ENCODE measurements at regions of chr1 and their contacts with region 1.

Region 1: GRCh38 chr1:232950197-232951176 is at the start of gene NTPCR:
- DNase-seq: peak; percentile 87 to 98 (median 95)
- ATAC-seq: peak; percentile 83
- H3K4me3 ChIP-seq: peak within 1 kb of the TSS; percentile 83 to 90
- H3K4me3 Mint-ChIP-seq: peak within 1 kb of the TSS; percentile 96
- H3K27ac ChIP-seq: peak within 1 kb of the TSS; percentile 56 to 64
- H3K27ac Mint-ChIP-seq: peak within 1 kb of the TSS; percentile 94
- H3K4me1 ChIP-seq: peaks cover 28% of the 10 kb centered on the region
- H3K4me1 Mint-ChIP-seq: peaks cover 44% of the 10 kb centered on the region
- H3K27me3 ChIP-seq: no peaks in the 10 kb centered on the region
- H3K27me3 Mint-ChIP-seq: no peaks in the 10 kb centered on the region
- CTCF ChIP-seq: no peak
- total RNA-seq, gene NTPCR: 3.4 to 3.9 TPM

Region 2: GRCh38 chr1:232805269-232806185 is 145.0 kb before region 1 on chr1 and contains the start of gene MAP10:
- CTCF ChIA-PET with region 1: no interaction called
- POLR2A ChIA-PET with region 1: no interaction called
- intact Hi-C with region 1: loop called (anchors 2 to 5 kb)
- DNase-seq: peak; percentile 48 to 85 (median 72)
- ATAC-seq: peak; percentile 72
- H3K4me3 ChIP-seq: peak within 1 kb of the TSS; percentile 72 to 96
- H3K4me3 Mint-ChIP-seq: peak within 1 kb of the TSS; percentile 82
- H3K27ac ChIP-seq: peak within 1 kb of the TSS; percentile 49 to 66
- H3K27ac Mint-ChIP-seq: peak within 1 kb of the TSS; percentile 73
- H3K4me1 ChIP-seq: peaks cover 8% of the 10 kb centered on the region
- H3K4me1 Mint-ChIP-seq: peaks cover 17% of the 10 kb centered on the region
- H3K27me3 ChIP-seq: no peaks in the 10 kb centered on the region
- H3K27me3 Mint-ChIP-seq: no peaks in the 10 kb centered on the region
- CTCF ChIP-seq: no peak
- total RNA-seq, gene MAP10: 0.89 to 0.98 TPM

Region 3: DNA sequence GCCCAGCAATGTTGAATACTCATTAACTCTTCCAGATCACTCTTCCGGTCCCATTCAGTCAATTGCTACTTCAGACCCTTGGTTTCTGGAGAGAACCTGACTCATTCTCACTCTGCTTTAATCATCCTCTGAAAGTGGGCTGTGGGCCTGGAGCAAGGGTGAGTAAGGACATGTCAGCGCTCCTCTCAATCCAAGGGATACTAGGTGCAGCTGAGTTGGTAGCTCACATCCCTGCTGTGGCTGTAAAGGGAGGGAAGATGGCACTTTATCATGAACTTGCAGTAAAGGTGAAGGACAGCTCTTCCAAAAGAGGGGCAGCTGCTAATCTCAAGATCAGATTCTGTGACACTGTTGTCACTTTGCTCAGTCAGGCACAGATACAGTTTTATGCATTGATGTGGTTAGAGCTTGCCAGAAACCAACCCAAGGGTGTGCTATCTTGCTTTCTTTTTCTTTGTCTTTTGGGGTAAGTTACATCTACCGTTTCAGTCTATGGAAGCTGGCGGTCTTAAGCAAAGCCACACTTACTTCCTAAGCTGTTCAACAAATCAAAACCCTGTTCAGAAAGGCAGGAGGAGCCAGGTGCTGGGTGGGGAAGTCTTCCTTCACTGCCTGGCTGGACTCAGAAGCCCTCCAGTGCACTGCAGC is 26.6 kb before region 1 on chr1:
- CTCF ChIA-PET with region 1: no interaction called
- POLR2A ChIA-PET with region 1: interaction called, 6 read pairs
- intact Hi-C with region 1: loop called (anchors 1 to 2 kb)
- DNase-seq: peak in 8 of 9 experiments; percentile 10 to 88 (median 50)
- ATAC-seq: peak; percentile 93
- H3K4me3 ChIP-seq: peak overlapping the region in 1 of 2 experiments; percentile 17
- H3K4me3 Mint-ChIP-seq: peak overlapping the region; percentile 63
- H3K27ac ChIP-seq: peak overlapping the region; percentile 37 to 66
- H3K27ac Mint-ChIP-seq: peak overlapping the region; percentile 92
- H3K4me1 ChIP-seq: peaks cover 38% of the 10 kb centered on the region
- H3K4me1 Mint-ChIP-seq: peaks cover 36% of the 10 kb centered on the region
- H3K27me3 ChIP-seq: no peaks in the 10 kb centered on the region
- H3K27me3 Mint-ChIP-seq: no peaks in the 10 kb centered on the region
- CTCF ChIP-seq: no peak

Region 4: DNA sequence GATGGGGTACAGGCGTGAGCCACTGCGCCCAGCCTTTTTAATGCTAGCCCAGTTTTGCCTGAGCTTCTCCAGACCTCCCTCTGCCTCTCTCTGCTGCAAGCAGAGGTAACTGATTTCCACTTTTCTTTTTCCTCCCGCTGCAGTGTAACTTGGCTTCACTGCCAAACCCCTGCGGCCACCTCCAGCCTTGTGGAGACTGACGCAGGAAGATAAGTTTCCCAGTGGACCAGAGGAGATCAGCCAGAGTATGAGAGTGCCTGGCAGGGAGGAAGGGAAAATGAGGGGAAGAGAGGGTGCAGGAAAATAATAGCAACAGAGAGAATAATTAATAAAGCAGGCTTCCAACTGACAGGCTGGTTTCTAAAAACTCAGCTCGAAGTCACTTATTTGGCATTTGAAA is 201.4 kb after region 1 on chr1:
- CTCF ChIA-PET with region 1: no interaction called
- POLR2A ChIA-PET with region 1: no interaction called
- intact Hi-C with region 1: no loop called
- DNase-seq: no peak
- ATAC-seq: no peak
- H3K4me3 ChIP-seq: no peak overlapping the region
- H3K4me3 Mint-ChIP-seq: no peak overlapping the region
- H3K27ac ChIP-seq: no peak overlapping the region
- H3K27ac Mint-ChIP-seq: no peak overlapping the region
- H3K4me1 ChIP-seq: no peaks in the 10 kb centered on the region
- H3K4me1 Mint-ChIP-seq: no peaks in the 10 kb centered on the region
- H3K27me3 ChIP-seq: no peaks in the 10 kb centered on the region
- H3K27me3 Mint-ChIP-seq: no peaks in the 10 kb centered on the region
- CTCF ChIP-seq: no peak

Region 5: DNA sequence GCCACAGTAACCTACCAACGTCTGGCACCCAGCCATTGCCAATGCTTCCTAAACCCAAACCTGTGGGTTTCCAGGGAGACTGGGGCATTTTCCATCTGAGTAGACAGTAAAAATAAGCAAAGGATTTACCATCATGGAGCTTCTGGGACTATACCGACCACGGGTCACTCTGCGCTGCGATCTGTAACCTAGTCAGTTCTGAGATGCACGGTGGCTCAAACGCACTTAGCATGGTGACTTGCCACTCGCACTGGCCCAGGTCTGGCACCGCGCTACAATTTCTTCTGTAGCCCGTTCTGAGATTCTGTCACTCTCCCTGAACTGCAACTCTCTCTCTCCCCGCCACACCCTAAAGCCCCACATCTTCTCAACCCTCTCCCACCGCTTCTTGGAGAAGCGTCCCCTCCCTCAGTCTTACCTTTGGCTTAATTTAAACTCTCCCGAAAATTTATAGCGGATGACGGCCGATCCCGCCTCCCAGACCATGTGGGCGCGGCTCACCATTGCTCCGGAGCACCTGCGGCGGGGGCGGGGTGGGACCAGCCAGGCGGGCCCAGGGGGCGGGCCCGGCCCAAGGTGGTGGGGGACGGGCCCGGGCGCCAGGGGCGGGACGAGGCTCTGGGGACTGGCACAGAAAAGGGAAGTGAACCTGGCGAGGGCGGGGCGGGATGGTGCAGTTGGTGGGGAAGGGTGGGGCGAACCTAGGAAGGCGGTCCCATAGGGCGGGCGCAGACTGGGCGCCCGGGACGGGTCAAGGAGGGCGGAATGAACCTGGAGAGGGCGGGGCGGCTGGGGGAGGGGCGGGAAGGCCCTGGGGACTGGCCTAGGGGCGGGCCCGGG is 376.5 kb after region 1 on chr1:
- CTCF ChIA-PET with region 1: no interaction called
- POLR2A ChIA-PET with region 1: no interaction called
- intact Hi-C with region 1: loop called in 1 of 2 experiments (anchors 10 kb)
- DNase-seq: peak; percentile 70 to 92 (median 86)
- ATAC-seq: peak; percentile 91
- H3K4me3 ChIP-seq: peak overlapping the region; percentile 33 to 42
- H3K4me3 Mint-ChIP-seq: peak overlapping the region; percentile 86
- H3K27ac ChIP-seq: no peak overlapping the region
- H3K27ac Mint-ChIP-seq: peak overlapping the region; percentile 72
- H3K4me1 ChIP-seq: peaks cover 7% of the 10 kb centered on the region
- H3K4me1 Mint-ChIP-seq: peaks cover 15% of the 10 kb centered on the region
- H3K27me3 ChIP-seq: peaks cover 0 to 2% of the 10 kb centered on the region in 2 experiments
- H3K27me3 Mint-ChIP-seq: peaks cover 14% of the 10 kb centered on the region
- CTCF ChIP-seq: no peak

Measured in CD8-positive, alpha-beta T cell (primary cell).